ENCODE measurements at regions of chr4 and their contacts with region 1.

Region 1: DNA sequence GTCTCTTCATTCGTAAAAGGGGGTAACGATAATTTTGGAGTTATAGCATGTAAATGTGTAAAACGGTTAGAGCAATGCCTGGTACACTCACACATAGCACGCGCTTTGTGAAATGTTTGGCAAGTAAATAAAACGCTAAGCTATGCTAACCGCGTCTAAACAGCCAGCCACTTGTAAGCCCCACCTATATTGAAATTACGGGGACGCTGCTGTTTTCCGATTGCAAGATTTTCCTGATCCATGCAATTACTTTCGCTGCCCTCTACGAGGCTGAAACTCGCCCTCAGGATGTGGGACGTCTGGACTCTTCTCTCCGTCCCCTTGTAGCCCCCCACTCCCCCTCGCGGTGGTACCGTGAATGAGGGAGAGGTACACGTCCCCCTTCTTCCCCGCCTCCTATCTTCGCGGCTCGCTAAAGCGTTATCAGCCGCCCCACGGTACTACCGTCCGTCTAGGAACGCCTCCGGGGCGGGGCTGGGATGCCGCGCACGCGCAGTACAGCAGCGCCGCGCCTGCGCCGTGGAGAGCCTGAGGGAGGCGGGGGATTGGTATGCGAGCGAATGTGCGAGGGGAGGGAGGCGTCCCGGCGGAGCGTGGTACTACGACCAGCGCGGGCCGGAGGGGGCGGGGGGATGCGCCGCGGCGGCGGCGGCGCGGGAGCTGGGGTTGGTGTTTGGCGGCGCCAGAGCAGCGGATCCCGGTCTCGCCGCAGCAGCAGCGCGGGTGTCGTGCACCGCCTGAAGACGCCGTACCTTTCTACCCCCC is at the start of gene STIM2:
- DNase-seq: peak; percentile 100
- H3K4me3 Mint-ChIP-seq: peak within 1 kb of the TSS; percentile 96
- H3K27ac Mint-ChIP-seq: peak within 1 kb of the TSS; percentile 98
- H3K4me1 Mint-ChIP-seq: peaks cover 54% of the 10 kb centered on the region
- H3K27me3 Mint-ChIP-seq: no peaks in the 10 kb centered on the region
- total RNA-seq, gene STIM2: 43.2 and 46.0 TPM in 2 replicates

Region 2: GRCh38 chr4:25862411-25863346 is 997.7 kb before region 1 on chr4 and contains the start of gene SEL1L3:
- intact Hi-C with region 1: loop called (anchors 5 kb)
- DNase-seq: peak; percentile 86
- H3K4me3 Mint-ChIP-seq: peak within 1 kb of the TSS; percentile 99
- H3K27ac Mint-ChIP-seq: peak within 1 kb of the TSS; percentile 100
- H3K4me1 Mint-ChIP-seq: peaks cover 30% of the 10 kb centered on the region
- H3K27me3 Mint-ChIP-seq: peaks cover 2% of the 10 kb centered on the region
- total RNA-seq, gene SEL1L3: 33.9 and 35.3 TPM in 2 replicates

Region 3: DNA sequence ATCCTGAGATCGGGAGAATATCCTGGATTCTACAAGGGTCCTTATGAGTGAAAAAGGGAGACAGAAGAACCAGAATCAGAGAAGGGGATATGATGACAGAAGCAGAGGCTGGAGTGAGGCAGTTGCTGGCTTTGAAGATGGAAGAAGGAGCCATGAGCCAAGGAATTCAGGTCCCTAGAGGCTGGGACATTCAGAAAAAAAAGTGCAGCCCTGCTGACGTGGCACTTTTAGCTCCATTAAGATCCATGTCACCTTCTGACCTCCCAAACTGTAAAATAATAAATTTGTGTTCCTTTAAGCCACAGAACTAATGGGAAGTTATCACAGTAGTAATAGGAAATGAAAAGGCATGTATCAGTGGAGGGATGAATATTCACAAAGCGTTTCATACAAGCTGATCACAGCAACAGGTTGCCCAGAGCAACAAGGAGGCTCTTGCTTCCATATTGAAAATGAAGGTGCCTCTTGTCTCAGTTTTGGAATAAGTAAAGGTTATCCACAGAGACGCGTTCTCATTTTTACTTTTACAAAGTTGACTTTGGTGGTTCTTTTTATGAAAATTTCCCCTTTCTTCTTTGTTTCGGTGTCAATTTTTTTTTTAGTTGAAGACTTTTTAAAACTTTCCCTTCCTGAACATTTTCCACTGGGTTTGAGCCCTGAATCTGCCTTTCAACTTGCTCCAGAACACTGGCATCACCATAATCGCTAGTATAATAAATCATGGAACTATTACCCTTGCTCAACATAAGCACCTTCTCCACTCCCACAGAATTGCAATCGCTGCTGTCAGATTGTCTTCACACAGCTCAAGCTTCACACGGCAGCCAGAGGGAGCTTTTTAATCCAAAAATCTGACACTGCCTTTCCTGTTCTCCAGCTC is 667.2 kb before region 1 on chr4:
- intact Hi-C with region 1: no loop called
- DNase-seq: no peak
- H3K4me3 Mint-ChIP-seq: peak overlapping the region; percentile 31
- H3K27ac Mint-ChIP-seq: peak overlapping the region; percentile 96
- H3K4me1 Mint-ChIP-seq: peaks cover 51% of the 10 kb centered on the region
- H3K27me3 Mint-ChIP-seq: no peaks in the 10 kb centered on the region

Region 4: GRCh38 chr4:26459054-26459755 is 401.1 kb before region 1 on chr4:
- intact Hi-C with region 1: loop called (anchors 10 kb)
- DNase-seq: peak; percentile 65
- H3K4me3 Mint-ChIP-seq: peak overlapping the region; percentile 41
- H3K27ac Mint-ChIP-seq: no peak overlapping the region
- H3K4me1 Mint-ChIP-seq: peaks cover 14% of the 10 kb centered on the region
- H3K27me3 Mint-ChIP-seq: peaks cover 3% of the 10 kb centered on the region

Region 5: GRCh38 chr4:26746802-26747213 is 113.5 kb before region 1 on chr4:
- intact Hi-C with region 1: loop called (anchors 5 kb)
- DNase-seq: peak; percentile 69
- H3K4me3 Mint-ChIP-seq: no peak overlapping the region
- H3K27ac Mint-ChIP-seq: no peak overlapping the region
- H3K4me1 Mint-ChIP-seq: peaks cover 13% of the 10 kb centered on the region
- H3K27me3 Mint-ChIP-seq: peaks cover 17% of the 10 kb centered on the region

Region 6: GRCh38 chr4:26765515-26765914 is 94.8 kb before region 1 on chr4:
- intact Hi-C with region 1: no loop called
- DNase-seq: no peak
- H3K4me3 Mint-ChIP-seq: no peak overlapping the region
- H3K27ac Mint-ChIP-seq: no peak overlapping the region
- H3K4me1 Mint-ChIP-seq: peaks cover 4% of the 10 kb centered on the region
- H3K27me3 Mint-ChIP-seq: peaks cover 3% of the 10 kb centered on the region

Region 7: GRCh38 chr4:26839534-26839951 is 20.8 kb before region 1 on chr4:
- intact Hi-C with region 1: no loop called
- DNase-seq: no peak
- H3K4me3 Mint-ChIP-seq: no peak overlapping the region
- H3K27ac Mint-ChIP-seq: no peak overlapping the region
- H3K4me1 Mint-ChIP-seq: peaks cover 4% of the 10 kb centered on the region
- H3K27me3 Mint-ChIP-seq: peaks cover 9% of the 10 kb centered on the region

Region 8: DNA sequence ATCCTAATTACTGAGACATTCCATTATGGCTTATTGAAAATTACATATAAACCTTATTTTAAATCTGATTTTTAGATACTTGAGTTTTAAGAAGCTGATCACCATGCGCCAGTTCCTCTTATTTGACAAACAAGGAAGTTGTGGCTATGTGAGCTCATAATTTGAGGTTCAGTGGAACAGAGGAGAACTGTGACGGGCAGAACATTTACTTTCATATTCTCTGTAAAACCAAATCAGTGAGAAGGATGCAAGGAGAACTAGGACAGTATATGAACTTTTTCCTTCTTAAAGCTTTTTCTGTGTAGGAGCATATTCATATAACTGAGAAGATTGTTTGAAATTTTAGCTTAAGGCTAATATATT is 25.6 kb after region 1 on chr4:
- intact Hi-C with region 1: loop called (anchors 1 kb)
- DNase-seq: peak; percentile 87
- H3K4me3 Mint-ChIP-seq: peak overlapping the region; percentile 72
- H3K27ac Mint-ChIP-seq: peak overlapping the region; percentile 87
- H3K4me1 Mint-ChIP-seq: peaks cover 53% of the 10 kb centered on the region
- H3K27me3 Mint-ChIP-seq: no peaks in the 10 kb centered on the region

Region 9: GRCh38 chr4:26992657-26993361 is 132.5 kb after region 1 on chr4:
- intact Hi-C with region 1: loop called (anchors 1 kb)
- DNase-seq: peak; percentile 68
- H3K4me3 Mint-ChIP-seq: no peak overlapping the region
- H3K27ac Mint-ChIP-seq: no peak overlapping the region
- H3K4me1 Mint-ChIP-seq: peaks cover 28% of the 10 kb centered on the region
- H3K27me3 Mint-ChIP-seq: no peaks in the 10 kb centered on the region